ENCODE measurements at regions of chr1 and their contacts with region 1.

Region 1: GRCh38 chr1:7930645-7931445 is 9.8 kb downstream of the TNFRSF9 start:
- DNase-seq: peak; percentile 37
- H3K4me3 Mint-ChIP-seq: peak overlapping the region; percentile 3
- H3K27ac Mint-ChIP-seq: peak overlapping the region; percentile 48
- H3K4me1 Mint-ChIP-seq: peaks cover 21% of the 10 kb centered on the region
- H3K27me3 Mint-ChIP-seq: peaks cover 2% of the 10 kb centered on the region

Region 2: GRCh38 chr1:6580593-6581409 is 1350.0 kb before region 1 on chr1:
- CTCF ChIA-PET with region 1: no interaction called
- intact Hi-C with region 1: no loop called
- DNase-seq: no peak
- H3K4me3 Mint-ChIP-seq: peak overlapping the region; percentile 97
- H3K27ac Mint-ChIP-seq: peak overlapping the region; percentile 82
- H3K4me1 Mint-ChIP-seq: peaks cover 38% of the 10 kb centered on the region
- H3K27me3 Mint-ChIP-seq: no peaks in the 10 kb centered on the region

Region 3: GRCh38 chr1:7013833-7014639 is 916.8 kb before region 1 on chr1:
- CTCF ChIA-PET with region 1: no interaction called
- intact Hi-C with region 1: no loop called
- DNase-seq: no peak
- H3K4me3 Mint-ChIP-seq: no peak overlapping the region
- H3K27ac Mint-ChIP-seq: no peak overlapping the region
- H3K4me1 Mint-ChIP-seq: no peaks in the 10 kb centered on the region
- H3K27me3 Mint-ChIP-seq: no peaks in the 10 kb centered on the region

Region 4: DNA sequence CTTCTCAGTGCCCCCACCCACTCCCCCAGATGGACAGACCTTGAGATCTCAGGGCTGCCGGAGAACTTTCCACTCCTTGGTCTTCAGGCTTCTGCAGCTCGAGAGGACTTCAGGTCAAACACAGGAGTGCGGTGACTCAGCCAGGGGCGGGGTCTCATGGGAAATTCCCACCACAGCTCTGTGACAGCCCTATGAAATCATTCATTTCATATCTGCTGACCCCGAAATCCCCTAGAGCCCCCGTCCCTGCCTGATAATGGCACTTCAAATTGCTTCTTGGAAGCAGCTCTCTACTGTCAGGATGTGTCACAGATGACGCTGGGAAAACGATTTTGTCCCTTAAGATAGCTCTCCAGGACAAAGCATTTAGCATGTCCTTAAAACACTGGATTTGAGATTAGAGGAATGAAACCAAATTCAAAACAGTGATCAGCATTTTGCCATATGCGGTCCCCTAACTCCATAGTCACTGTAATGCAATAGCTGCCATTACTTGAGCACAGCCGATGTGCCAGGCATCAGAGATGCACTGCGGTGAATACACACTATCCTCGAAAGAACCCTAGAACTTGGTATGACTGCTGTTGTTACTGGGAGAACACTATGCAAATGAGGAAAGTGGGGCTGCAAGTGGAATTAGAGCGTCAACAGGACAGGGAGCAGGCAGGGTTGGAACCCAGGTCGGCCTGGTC is 10.0 kb after region 1 on chr1 and contains the start of gene TNFRSF9:
- CTCF ChIA-PET with region 1: interaction called, 5 read pairs
- intact Hi-C with region 1: loop called (anchors 1 kb)
- DNase-seq: peak; percentile 89
- H3K4me3 Mint-ChIP-seq: peak within 1 kb of the TSS; percentile 75
- H3K27ac Mint-ChIP-seq: peak within 1 kb of the TSS; percentile 68
- H3K4me1 Mint-ChIP-seq: peaks cover 50% of the 10 kb centered on the region
- H3K27me3 Mint-ChIP-seq: peaks cover 13% of the 10 kb centered on the region
- total RNA-seq, gene TNFRSF9: 10.5 to 11.6 TPM

Region 5: DNA sequence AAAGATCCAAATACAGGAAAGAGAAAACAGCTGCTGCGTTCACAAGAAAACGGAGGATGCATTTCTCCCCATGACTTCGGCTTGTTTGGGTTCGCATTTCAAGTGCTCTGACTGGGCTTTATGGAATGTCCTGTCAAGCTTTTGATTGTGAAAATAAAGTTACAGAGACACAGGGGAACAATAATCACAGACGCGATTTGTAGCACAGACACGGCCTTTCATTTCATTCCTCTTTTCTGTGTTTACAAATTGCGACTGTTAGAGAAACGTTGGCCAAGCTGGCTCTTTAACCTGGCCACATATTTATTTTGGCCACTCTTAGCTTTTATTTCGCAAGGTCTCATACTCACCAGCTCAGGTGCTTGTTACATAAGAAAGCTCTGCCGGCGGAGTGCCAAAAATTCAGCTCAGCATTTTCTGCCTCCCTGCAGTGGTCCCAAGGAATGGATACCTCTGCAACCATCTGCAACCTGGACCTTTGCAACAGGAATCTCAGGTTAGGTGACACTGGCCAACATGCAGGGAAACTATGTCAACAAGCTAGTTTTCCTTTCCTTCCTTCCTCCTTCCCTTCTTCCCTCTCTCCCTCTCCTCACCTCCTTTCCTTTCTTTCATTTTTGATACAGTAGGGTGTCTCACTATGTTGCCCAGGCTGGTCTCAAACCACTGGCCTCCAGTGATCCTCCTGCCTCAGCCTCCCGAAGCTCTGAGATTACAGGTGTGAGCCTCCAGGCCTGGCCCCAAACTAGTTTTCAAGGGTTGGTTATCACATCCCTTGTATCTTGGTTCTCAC is 328.8 kb after region 1 on chr1:
- CTCF ChIA-PET with region 1: no interaction called
- intact Hi-C with region 1: no loop called
- DNase-seq: no peak
- H3K4me3 Mint-ChIP-seq: no peak overlapping the region
- H3K27ac Mint-ChIP-seq: no peak overlapping the region
- H3K4me1 Mint-ChIP-seq: no peaks in the 10 kb centered on the region
- H3K27me3 Mint-ChIP-seq: no peaks in the 10 kb centered on the region

Measured in activated naive CD4-positive, alpha-beta T cell treated with anti-CD3 and anti-CD28 coated beads for 36 hours (primary cell).